Activated CD4-positive, alpha-beta memory T cell treated with anti-CD3 and anti-CD28 coated beads, Interleukin-2, amount 10 ng/mL, durations not matched to agents 7 days and 5 days (primary cell): ENCODE measurements at regions of chr5 and their contacts with region 1.

Region 1: GRCh38 chr5:35852084-35852734 is 4.5 kb upstream of the IL7R start:
- DNase-seq: peak; percentile 35
- H3K4me3 Mint-ChIP-seq: peak overlapping the region; percentile 79
- H3K27ac Mint-ChIP-seq: peak overlapping the region; percentile 98
- H3K4me1 Mint-ChIP-seq: peaks cover 71% of the 10 kb centered on the region
- H3K27me3 Mint-ChIP-seq: no peaks in the 10 kb centered on the region

Region 2: DNA sequence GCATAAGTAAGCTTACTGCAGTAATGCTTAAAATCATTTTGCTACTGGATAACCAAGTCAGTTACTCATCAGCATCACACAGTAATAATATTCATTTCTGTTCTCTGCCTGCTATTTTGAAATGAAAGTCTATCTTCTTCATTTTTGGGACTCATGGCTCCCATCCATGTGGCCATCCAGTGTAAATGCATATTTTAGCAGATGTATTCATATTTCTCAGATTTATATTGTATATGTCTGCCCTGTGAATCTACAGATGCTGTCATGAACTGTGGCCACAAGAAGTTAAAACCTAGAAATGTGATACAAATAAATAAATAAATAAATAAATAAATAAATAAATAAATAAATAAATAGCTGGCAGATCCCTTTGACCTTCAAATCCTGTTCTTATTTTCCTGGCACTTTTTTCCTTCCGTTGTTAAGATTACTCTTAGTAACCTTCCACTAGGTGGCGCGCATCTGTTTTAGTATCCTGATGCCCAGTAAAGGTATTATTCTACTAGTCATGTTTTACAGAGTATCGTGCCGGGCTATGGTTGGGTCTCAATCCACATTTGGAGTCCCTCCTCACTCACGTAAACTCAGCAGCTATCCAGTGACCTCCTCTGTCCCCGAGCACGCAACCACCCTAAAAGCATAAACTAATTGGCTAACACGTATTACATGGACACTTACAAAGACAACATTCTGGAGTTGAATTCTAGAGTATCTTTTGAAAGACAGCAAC is 74.7 kb before region 1 on chr5:
- CTCF ChIA-PET with region 1: interaction called, 87 read pairs
- POLR2A ChIA-PET with region 1: interaction called, 158 read pairs
- DNase-seq: peak; percentile 72
- H3K4me3 Mint-ChIP-seq: no peak overlapping the region
- H3K27ac Mint-ChIP-seq: peak overlapping the region; percentile 65
- H3K4me1 Mint-ChIP-seq: peaks cover 79% of the 10 kb centered on the region
- H3K27me3 Mint-ChIP-seq: no peaks in the 10 kb centered on the region

Region 3: GRCh38 chr5:35794684-35795375 is 57.4 kb before region 1 on chr5:
- CTCF ChIA-PET with region 1: interaction called, 3 read pairs
- POLR2A ChIA-PET with region 1: interaction called, 51 read pairs
- DNase-seq: no peak
- H3K4me3 Mint-ChIP-seq: no peak overlapping the region
- H3K27ac Mint-ChIP-seq: peak overlapping the region; percentile 91
- H3K4me1 Mint-ChIP-seq: peaks cover 79% of the 10 kb centered on the region
- H3K27me3 Mint-ChIP-seq: no peaks in the 10 kb centered on the region

Region 4: DNA sequence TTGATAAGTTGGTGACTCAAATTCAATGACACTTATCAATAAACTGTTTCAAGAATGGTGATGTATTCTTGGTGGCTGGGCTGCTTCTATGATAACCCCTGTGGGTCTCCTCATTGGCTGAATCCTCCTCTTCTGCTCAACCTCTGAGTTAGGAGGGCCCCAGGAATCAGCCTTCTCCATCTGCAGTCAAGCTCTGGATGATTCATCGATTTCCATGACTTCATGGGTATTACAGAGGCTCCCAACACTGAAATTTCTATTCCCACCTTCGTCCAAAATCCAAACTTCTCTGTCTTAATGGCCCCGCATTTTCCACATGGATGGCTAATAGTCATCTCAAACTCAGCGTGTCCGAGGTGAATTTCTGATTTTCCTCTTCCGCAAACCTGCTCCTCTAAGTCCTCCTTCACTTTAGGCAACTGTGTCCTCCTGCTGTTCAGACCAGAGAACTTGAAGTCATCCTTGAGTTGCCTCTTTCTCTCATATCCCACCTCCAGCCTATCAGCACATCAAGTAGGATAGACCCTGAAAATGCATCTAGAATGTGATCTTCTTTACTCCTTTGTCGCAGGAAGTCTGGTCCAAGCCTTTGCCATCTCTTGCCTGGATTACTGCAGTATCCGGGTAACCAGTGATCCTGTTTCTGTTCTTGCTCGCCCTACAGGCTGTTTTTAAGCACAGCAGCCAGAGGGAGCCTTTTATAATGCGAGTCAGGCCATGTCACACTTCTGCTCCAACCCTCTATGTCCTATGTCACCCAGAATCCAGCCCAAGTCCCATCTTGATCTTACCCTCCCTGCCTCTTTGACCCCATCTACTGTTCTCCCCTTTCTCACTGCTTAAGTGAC is 36.9 kb before region 1 on chr5:
- CTCF ChIA-PET with region 1: interaction called, 4 read pairs
- POLR2A ChIA-PET with region 1: interaction called, 422 read pairs
- DNase-seq: peak; percentile 63
- H3K4me3 Mint-ChIP-seq: no peak overlapping the region
- H3K27ac Mint-ChIP-seq: no peak overlapping the region
- H3K4me1 Mint-ChIP-seq: peaks cover 47% of the 10 kb centered on the region
- H3K27me3 Mint-ChIP-seq: no peaks in the 10 kb centered on the region

Region 5: GRCh38 chr5:35838370-35839042 is 13.7 kb before region 1 on chr5:
- CTCF ChIA-PET with region 1: interaction called, 3 read pairs
- POLR2A ChIA-PET with region 1: interaction called, 422 read pairs
- DNase-seq: no peak
- H3K4me3 Mint-ChIP-seq: no peak overlapping the region
- H3K27ac Mint-ChIP-seq: peak overlapping the region; percentile 19
- H3K4me1 Mint-ChIP-seq: peaks cover 57% of the 10 kb centered on the region
- H3K27me3 Mint-ChIP-seq: no peaks in the 10 kb centered on the region

Region 6: GRCh38 chr5:35881758-35882157 is 29.5 kb after region 1 on chr5:
- CTCF ChIA-PET with region 1: no interaction called
- POLR2A ChIA-PET with region 1: interaction called, 22 read pairs
- DNase-seq: no peak
- H3K4me3 Mint-ChIP-seq: no peak overlapping the region
- H3K27ac Mint-ChIP-seq: no peak overlapping the region
- H3K4me1 Mint-ChIP-seq: peaks cover 63% of the 10 kb centered on the region
- H3K27me3 Mint-ChIP-seq: no peaks in the 10 kb centered on the region

Region 7: DNA sequence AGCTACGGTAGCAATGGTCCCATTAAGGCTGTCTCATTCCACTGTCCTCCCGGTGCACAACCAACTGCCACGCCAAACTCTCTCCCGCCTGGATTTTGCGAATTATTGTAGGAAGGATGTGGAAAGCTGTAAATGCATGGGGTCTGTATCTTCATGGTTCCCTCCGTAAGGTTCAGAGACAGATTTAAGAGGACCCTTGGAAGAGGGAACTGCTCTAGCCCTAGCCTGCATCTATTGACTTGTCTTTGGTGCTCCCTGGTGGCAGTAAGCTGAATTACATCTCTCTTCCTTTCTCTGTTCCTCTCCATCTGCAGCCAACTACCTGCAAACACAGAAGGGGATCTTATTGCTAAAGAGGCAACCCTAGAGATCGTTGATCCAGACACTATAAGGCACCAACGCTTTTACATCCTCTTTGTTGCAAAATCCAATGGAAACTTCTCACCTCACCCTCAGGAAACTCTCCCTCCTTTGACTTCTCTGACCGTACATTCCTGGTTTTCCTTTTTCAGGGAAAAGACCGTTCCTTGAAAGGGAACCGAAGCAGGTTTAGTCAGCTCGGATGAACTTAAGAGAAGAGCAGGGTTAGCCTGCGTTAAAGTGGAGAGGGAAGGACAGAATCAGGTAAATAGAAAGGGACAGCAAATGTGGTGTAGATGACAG is 74.3 kb after region 1 on chr5:
- CTCF ChIA-PET with region 1: interaction called, 21 read pairs
- POLR2A ChIA-PET with region 1: interaction called, 4 read pairs
- DNase-seq: peak; percentile 64
- H3K4me3 Mint-ChIP-seq: no peak overlapping the region
- H3K27ac Mint-ChIP-seq: no peak overlapping the region
- H3K4me1 Mint-ChIP-seq: peaks cover 39% of the 10 kb centered on the region
- H3K27me3 Mint-ChIP-seq: peaks cover 5% of the 10 kb centered on the region